ENCODE measurements at regions of chr1 and their contacts with region 1.

Region 1: GRCh38 chr1:228452194-228453021 is 34.8 kb upstream of the RNF187 start:
- DNase-seq: no peak
- H3K4me3 ChIP-seq: no peak overlapping the region
- H3K27ac ChIP-seq: no peak overlapping the region
- H3K4me1 ChIP-seq: no peaks in the 10 kb centered on the region
- H3K27me3 ChIP-seq: no peaks in the 10 kb centered on the region
- CTCF ChIP-seq: no peak
- POLR2A ChIP-seq: no peak

Region 2: GRCh38 chr1:228430243-228430642 is 22.2 kb before region 1 on chr1:
- intact Hi-C with region 1: no loop called
- DNase-seq: no peak
- H3K4me3 ChIP-seq: no peak overlapping the region
- H3K27ac ChIP-seq: no peak overlapping the region
- H3K4me1 ChIP-seq: no peaks in the 10 kb centered on the region
- H3K27me3 ChIP-seq: no peaks in the 10 kb centered on the region
- CTCF ChIP-seq: no peak
- POLR2A ChIP-seq: no peak

Region 3: GRCh38 chr1:229192031-229192430 is 739.6 kb after region 1 on chr1:
- intact Hi-C with region 1: no loop called
- DNase-seq: no peak
- H3K4me3 ChIP-seq: no peak overlapping the region
- H3K27ac ChIP-seq: no peak overlapping the region
- H3K4me1 ChIP-seq: no peaks in the 10 kb centered on the region
- H3K27me3 ChIP-seq: no peaks in the 10 kb centered on the region
- CTCF ChIP-seq: no peak
- POLR2A ChIP-seq: no peak

Region 4: DNA sequence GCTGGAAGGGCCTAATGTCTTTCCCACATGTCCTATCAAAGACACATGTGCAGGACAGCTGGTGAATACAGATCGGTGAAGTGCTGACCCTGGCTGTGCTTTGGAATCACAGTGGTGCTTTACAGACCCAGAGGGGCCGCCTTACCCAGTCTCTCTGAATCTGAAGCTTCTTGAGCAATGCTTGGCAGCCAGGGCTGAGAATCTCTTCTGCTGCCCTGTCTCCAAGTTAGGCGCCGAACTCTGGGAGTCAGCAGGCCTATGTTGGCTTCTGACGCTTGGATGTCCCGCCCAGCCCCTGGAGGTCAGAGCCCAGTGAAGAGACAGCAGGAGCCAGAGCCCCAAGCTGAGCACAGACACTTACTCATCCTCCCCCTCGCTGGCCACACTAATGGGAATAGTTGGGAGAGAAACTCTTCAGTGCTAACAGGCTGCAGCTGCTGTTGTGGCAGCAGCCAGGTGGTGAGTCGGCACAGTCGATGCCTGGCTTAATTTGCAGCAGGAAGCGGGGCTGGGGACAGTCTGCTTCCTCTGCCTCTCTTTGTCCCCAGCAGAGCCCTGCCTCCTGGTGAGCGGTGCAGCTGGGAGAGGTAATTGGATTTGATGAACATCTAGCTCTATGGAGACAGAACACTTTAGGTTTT is 1241.8 kb after region 1 on chr1:
- intact Hi-C with region 1: loop called (anchors 5 kb)
- DNase-seq: peak in 1 of 2 donors; percentile 25
- H3K4me3 ChIP-seq: peak overlapping the region in 1 of 3 donors; percentile 33
- H3K27ac ChIP-seq: peak overlapping the region in 1 of 2 donors; percentile 48
- H3K4me1 ChIP-seq: no peaks in the 10 kb centered on the region
- H3K27me3 ChIP-seq: no peaks in the 10 kb centered on the region
- CTCF ChIP-seq: no peak
- POLR2A ChIP-seq: no peak